Activated naive CD4-positive, alpha-beta T cell treated with anti-CD3 and anti-CD28 coated beads for 36 hours (primary cell): ENCODE measurements at regions of chr1 and their contacts with region 1.

Region 1: DNA sequence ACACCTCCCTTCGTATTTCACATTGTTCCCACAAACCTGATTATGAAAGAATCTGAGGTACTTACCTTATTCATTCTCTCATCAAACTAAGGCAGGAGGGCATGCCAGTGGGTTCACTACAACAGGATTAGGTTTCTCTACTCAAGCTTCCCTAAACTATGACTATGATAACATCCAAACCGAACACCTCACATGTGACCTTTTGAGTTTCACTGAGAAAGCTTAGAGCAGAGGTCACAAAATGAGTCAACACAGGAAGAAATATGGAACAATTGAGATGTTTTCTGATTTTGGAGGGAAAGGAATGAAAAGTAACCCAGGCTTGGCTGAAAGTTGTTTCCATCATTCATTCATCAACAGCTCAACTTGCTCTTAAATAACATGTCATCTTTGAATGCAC is 24.1 kb downstream of the UBR4 start:
- DNase-seq: no peak
- H3K4me3 Mint-ChIP-seq: no peak overlapping the region
- H3K27ac Mint-ChIP-seq: peak overlapping the region; percentile 86
- H3K4me1 Mint-ChIP-seq: peaks cover 27% of the 10 kb centered on the region
- H3K27me3 Mint-ChIP-seq: no peaks in the 10 kb centered on the region

Region 2: GRCh38 chr1:19204446-19205266 is 18.7 kb after region 1 on chr1:
- CTCF ChIA-PET with region 1: interaction called, 3 read pairs
- intact Hi-C with region 1: loop called (anchors 1 kb)
- DNase-seq: no peak
- H3K4me3 Mint-ChIP-seq: no peak overlapping the region
- H3K27ac Mint-ChIP-seq: no peak overlapping the region
- H3K4me1 Mint-ChIP-seq: peaks cover 70% of the 10 kb centered on the region
- H3K27me3 Mint-ChIP-seq: no peaks in the 10 kb centered on the region

Region 3: GRCh38 chr1:19260211-19261138 is 74.5 kb after region 1 on chr1:
- CTCF ChIA-PET with region 1: no interaction called
- intact Hi-C with region 1: no loop called
- DNase-seq: no peak
- H3K4me3 Mint-ChIP-seq: no peak overlapping the region
- H3K27ac Mint-ChIP-seq: no peak overlapping the region
- H3K4me1 Mint-ChIP-seq: peaks cover 19% of the 10 kb centered on the region
- H3K27me3 Mint-ChIP-seq: no peaks in the 10 kb centered on the region